Endothelial cell of umbilical vein (primary cell): ENCODE measurements at regions of chr6 and their contacts with region 1.

Region 1: DNA sequence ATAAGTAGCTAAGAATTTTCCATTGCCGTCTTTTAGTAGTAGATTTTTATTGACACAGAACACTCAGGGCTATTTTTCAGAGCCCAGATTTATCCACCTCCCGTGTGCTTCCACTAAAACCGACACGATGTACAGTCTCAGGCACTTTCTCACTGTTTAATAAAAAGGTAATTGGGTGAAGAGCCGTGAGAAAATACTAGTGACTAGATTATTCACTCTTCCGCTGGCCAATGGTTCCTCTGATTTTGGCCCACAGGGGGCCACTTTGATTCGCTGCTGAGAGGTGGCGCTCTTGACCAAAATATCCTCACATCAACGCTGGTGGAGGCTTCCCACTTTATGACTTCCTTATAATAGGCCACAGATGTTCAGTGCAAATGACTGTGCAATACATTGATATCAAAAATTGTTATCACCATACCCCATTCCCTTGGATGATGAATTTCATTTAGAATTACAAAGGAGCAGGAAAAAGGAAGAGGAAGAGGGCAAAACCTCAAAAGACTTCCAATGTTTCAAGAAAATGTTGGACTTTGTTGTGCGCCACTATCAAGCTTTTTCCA is 12.3 kb upstream of the HDDC2 start:
- DNase-seq: peak; percentile 62
- H3K4me3 ChIP-seq: no peak overlapping the region
- H3K27ac ChIP-seq: no peak overlapping the region
- H3K4me1 ChIP-seq: no peaks in the 10 kb centered on the region
- H3K27me3 ChIP-seq: peaks cover under 1 to 15% of the 10 kb centered on the region in 2 experiments
- CTCF ChIP-seq: peak; percentile 76 to 81
- POLR2A ChIP-seq: no peak

Region 2: GRCh38 chr6:124870611-124871459 is 443.3 kb before region 1 on chr6:
- CTCF ChIA-PET with region 1: interaction called, 48 read pairs
- POLR2A ChIA-PET with region 1: no interaction called
- dilution Hi-C with region 1: no loop called
- intact Hi-C with region 1: loop called (anchors 1 kb)
- DNase-seq: peak; percentile 46
- H3K4me3 ChIP-seq: no peak overlapping the region
- H3K27ac ChIP-seq: no peak overlapping the region
- H3K4me1 ChIP-seq: no peaks in the 10 kb centered on the region
- H3K27me3 ChIP-seq: no peaks in the 10 kb centered on the region
- CTCF ChIP-seq: peak; percentile 31 to 51
- POLR2A ChIP-seq: no peak

Region 3: DNA sequence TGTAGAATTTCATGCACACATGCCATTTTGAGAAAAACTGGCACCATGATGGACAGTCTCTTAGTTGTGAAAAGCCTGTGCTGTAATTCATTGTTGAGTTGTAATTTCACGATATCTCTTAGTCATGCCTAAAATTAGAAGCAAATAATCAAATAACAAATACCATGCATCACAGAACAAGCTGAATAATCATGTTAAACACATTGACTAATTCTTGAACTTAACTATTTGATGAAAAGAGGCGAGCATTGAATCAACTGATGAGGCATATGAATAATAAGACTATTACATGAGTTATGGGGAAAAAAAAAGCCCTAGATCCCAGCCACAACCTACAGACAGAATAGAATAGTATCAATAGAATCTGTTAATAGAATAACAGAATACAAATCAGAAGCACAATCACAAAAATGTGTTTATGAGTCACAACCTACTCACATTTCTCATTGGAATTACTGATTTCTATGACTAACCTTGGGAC is 366.1 kb before region 1 on chr6:
- CTCF ChIA-PET with region 1: no interaction called
- POLR2A ChIA-PET with region 1: no interaction called
- dilution Hi-C with region 1: no loop called
- intact Hi-C with region 1: no loop called
- DNase-seq: no peak
- H3K4me3 ChIP-seq: no peak overlapping the region
- H3K27ac ChIP-seq: no peak overlapping the region
- H3K4me1 ChIP-seq: no peaks in the 10 kb centered on the region
- H3K27me3 ChIP-seq: no peaks in the 10 kb centered on the region
- CTCF ChIP-seq: no peak
- POLR2A ChIP-seq: no peak

Region 4: GRCh38 chr6:125363039-125363823 is 49.1 kb after region 1 on chr6:
- CTCF ChIA-PET with region 1: interaction called, 4 read pairs
- POLR2A ChIA-PET with region 1: no interaction called
- dilution Hi-C with region 1: no loop called
- intact Hi-C with region 1: loop called (anchors 2 kb)
- DNase-seq: peak; percentile 64
- H3K4me3 ChIP-seq: peak overlapping the region; percentile 31 to 63 (median 42)
- H3K27ac ChIP-seq: peak overlapping the region; percentile 58
- H3K4me1 ChIP-seq: peaks cover 16% of the 10 kb centered on the region
- H3K27me3 ChIP-seq: peaks cover 15 to 27% of the 10 kb centered on the region in 2 experiments
- CTCF ChIP-seq: no peak
- POLR2A ChIP-seq: no peak

Region 5: GRCh38 chr6:125584468-125585029 is 270.4 kb after region 1 on chr6:
- CTCF ChIA-PET with region 1: no interaction called
- POLR2A ChIA-PET with region 1: no interaction called
- dilution Hi-C with region 1: no loop called
- intact Hi-C with region 1: loop called (anchors 2 kb)
- DNase-seq: peak; percentile 13
- H3K4me3 ChIP-seq: no peak overlapping the region
- H3K27ac ChIP-seq: no peak overlapping the region
- H3K4me1 ChIP-seq: peaks cover 41% of the 10 kb centered on the region
- H3K27me3 ChIP-seq: peaks cover 0 to 22% of the 10 kb centered on the region in 2 experiments
- CTCF ChIP-seq: no peak
- POLR2A ChIP-seq: no peak

Region 6: GRCh38 chr6:125759184-125759902 is 445.2 kb after region 1 on chr6:
- CTCF ChIA-PET with region 1: interaction called, 439 read pairs
- POLR2A ChIA-PET with region 1: no interaction called
- dilution Hi-C with region 1: loop called (anchors 10 kb)
- intact Hi-C with region 1: no loop called
- DNase-seq: no peak
- H3K4me3 ChIP-seq: no peak overlapping the region
- H3K27ac ChIP-seq: no peak overlapping the region
- H3K4me1 ChIP-seq: no peaks in the 10 kb centered on the region
- H3K27me3 ChIP-seq: peaks cover 3 to 18% of the 10 kb centered on the region in 2 experiments
- CTCF ChIP-seq: peak; percentile 38 to 39
- POLR2A ChIP-seq: no peak

Region 7: DNA sequence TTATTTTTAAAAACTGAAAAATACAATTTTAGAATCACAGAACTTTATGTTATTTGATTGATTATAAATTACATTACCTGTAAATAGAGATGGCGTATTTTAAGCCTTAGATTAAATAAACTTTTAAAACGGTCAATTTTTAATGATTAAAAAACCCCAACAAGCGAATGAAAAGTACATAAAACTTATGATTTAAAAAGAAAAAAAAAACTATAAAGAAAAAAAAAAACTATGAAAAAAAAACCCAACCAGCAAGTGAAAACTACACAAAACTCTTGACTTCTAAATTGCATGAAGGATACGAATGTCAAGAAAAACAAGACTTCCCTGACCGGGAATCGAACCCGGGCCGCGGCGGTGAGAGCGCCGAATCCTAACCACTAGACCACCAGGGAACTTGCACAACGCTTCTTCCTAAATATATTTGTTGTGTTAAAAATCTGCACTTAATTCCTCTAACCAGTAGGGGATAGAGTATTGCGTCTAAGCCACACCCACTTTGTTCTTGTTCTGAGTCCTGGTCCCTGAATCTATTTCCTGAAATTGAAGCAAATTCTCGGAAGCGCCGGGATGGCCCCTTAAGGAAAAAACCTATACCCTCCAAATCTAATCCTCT is 465.9 kb after region 1 on chr6:
- CTCF ChIA-PET with region 1: interaction called, 14 read pairs
- POLR2A ChIA-PET with region 1: no interaction called
- dilution Hi-C with region 1: no loop called
- intact Hi-C with region 1: no loop called
- DNase-seq: peak; percentile 96
- H3K4me3 ChIP-seq: peak overlapping the region; percentile 62 to 95 (median 84)
- H3K27ac ChIP-seq: peak overlapping the region; percentile 94
- H3K4me1 ChIP-seq: peaks cover 8% of the 10 kb centered on the region
- H3K27me3 ChIP-seq: peaks cover 8 to 10% of the 10 kb centered on the region in 2 experiments
- CTCF ChIP-seq: peak in 1 of 2 donors; percentile 5
- POLR2A ChIP-seq: no peak